Activated T-helper 1 cell treated with anti-CD3 and anti-CD28 coated beads, Interleukin-12 subunit alpha, Interleukin-12 subunit beta, Interleukin-2, Interleukin-4 antibody, amounts not matched to agents 30 ng/mL and 10 ng/mL and 1 ng/mL, durations not matched to agents 14 hours and 24 hours and 36 hours (primary cell): ENCODE measurements at regions of chr1 and their contacts with region 1.

Region 1: DNA sequence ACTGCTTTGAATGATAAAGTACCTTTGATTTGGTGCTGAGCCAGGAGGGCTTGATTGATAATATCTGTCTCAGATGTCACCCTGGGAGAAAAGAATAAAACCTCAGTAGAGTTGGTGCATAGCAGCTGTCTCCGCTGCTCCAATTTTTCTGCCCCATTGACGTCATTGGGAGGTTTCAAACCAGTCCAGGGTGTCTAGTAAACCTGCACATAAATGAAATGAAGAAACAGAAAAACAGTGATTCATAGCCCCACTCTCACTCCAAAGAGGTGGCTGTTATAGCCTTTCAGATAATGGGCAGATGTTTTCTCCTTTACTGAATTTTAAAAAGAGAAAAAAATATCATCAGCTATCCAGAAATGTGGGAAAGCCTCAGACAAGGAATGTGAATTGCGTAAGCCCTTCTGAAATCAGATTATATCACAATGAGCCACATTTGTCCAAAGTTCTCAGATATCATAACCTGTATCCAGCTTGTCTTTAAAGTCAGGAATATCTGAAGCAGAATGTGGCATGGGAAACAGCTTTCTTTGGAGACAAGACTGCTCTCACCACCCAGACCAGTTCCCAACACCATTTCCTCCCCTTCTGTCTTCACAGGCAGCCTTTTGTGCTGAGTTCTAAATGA is 351.3 kb upstream of the SGIP1 start:
- DNase-seq: peak; percentile 33
- H3K4me3 Mint-ChIP-seq: peak overlapping the region; percentile 51
- H3K27ac Mint-ChIP-seq: peak overlapping the region; percentile 18
- H3K4me1 Mint-ChIP-seq: peaks cover 51% of the 10 kb centered on the region
- H3K27me3 Mint-ChIP-seq: peaks cover 2% of the 10 kb centered on the region

Region 2: GRCh38 chr1:66137235-66137634 is 45.4 kb before region 1 on chr1:
- intact Hi-C with region 1: loop called (anchors 5 kb)
- DNase-seq: no peak
- H3K4me3 Mint-ChIP-seq: no peak overlapping the region
- H3K27ac Mint-ChIP-seq: no peak overlapping the region
- H3K4me1 Mint-ChIP-seq: no peaks in the 10 kb centered on the region
- H3K27me3 Mint-ChIP-seq: no peaks in the 10 kb centered on the region

Region 3: DNA sequence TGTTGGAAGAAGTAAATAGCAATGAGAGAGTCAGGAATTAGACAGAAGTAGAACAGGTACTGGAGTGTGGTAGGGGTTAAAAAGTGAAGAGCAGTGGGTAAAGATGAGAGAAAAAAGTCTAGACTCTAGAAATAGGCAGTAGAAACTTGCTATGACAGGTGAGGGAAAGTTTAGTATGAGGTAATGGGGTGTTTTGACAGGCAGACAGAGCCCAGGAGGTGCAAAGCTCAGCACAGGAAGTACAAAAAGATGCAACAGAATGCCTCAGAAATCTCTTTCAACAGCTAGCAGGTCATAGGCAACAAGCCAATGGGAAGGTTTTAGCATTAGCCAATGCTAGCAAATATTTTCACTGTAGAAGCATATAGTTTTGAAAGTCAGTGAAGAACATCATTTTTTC is 32.2 kb after region 1 on chr1:
- intact Hi-C with region 1: loop called (anchors 5 kb)
- DNase-seq: peak; percentile 21
- H3K4me3 Mint-ChIP-seq: no peak overlapping the region
- H3K27ac Mint-ChIP-seq: peak overlapping the region; percentile 54
- H3K4me1 Mint-ChIP-seq: peaks cover 17% of the 10 kb centered on the region
- H3K27me3 Mint-ChIP-seq: peaks cover 2% of the 10 kb centered on the region

Region 4: DNA sequence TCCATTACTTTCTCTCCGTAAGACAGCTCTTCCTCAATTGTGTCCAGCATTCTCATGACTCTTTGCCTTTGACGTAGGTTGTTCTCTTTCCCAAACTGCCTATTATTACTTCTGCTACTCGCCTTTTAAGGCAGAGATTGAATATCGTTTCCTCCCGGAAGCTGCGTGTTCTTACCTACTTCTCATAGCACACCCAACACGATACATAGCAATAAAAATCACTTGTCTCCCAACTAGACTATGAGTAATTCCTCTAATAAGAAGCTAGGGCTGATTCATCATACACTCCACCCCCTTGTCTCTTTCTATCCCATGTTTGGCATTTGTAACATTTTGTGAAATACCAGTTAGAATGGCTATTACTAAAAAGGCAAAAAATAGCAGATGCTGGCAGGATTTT is 295.5 kb after region 1 on chr1:
- intact Hi-C with region 1: no loop called
- DNase-seq: no peak
- H3K4me3 Mint-ChIP-seq: no peak overlapping the region
- H3K27ac Mint-ChIP-seq: no peak overlapping the region
- H3K4me1 Mint-ChIP-seq: no peaks in the 10 kb centered on the region
- H3K27me3 Mint-ChIP-seq: peaks cover 6% of the 10 kb centered on the region

Region 5: DNA sequence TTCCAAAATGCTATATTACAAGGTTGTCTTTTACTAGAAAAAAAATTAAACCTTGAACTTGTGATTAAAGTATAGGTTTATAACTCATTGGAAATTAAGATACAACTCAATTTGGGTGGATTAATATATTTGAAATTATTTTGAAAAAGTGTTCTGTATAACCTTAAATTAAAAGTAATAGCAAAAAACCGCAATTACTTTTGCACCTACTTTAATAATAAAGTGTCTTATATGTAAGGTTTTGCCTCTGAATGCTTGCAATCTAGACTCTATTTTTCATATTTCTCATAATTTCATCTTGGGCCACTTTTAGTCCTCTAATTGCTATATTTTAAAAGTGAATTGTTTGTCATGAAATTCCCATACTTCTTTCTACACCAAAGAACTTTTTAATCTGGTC is 481.1 kb after region 1 on chr1:
- intact Hi-C with region 1: no loop called
- DNase-seq: no peak
- H3K4me3 Mint-ChIP-seq: no peak overlapping the region
- H3K27ac Mint-ChIP-seq: no peak overlapping the region
- H3K4me1 Mint-ChIP-seq: no peaks in the 10 kb centered on the region
- H3K27me3 Mint-ChIP-seq: peaks cover 10% of the 10 kb centered on the region

Region 6: GRCh38 chr1:66778266-66778665 is 595.6 kb after region 1 on chr1:
- intact Hi-C with region 1: no loop called
- DNase-seq: no peak
- H3K4me3 Mint-ChIP-seq: no peak overlapping the region
- H3K27ac Mint-ChIP-seq: no peak overlapping the region
- H3K4me1 Mint-ChIP-seq: peaks cover 7% of the 10 kb centered on the region
- H3K27me3 Mint-ChIP-seq: peaks cover 14% of the 10 kb centered on the region